MCF 10A (cell line): ENCODE measurements at regions of chr2 and their contacts with region 1.

Region 1: GRCh38 chr2:241686649-241687425 is at the start of gene DTYMK:
- DNase-seq: peak; percentile 97
- H3K4me3 Mint-ChIP-seq: peak within 1 kb of the TSS; percentile 90
- H3K27ac Mint-ChIP-seq: peak within 1 kb of the TSS; percentile 91
- H3K4me1 Mint-ChIP-seq: peaks cover 7% of the 10 kb centered on the region
- H3K27me3 Mint-ChIP-seq: no peaks in the 10 kb centered on the region
- CTCF ChIP-seq: no peak
- total RNA-seq, gene DTYMK: 38.2 and 66.3 TPM in 2 replicates

Region 2: DNA sequence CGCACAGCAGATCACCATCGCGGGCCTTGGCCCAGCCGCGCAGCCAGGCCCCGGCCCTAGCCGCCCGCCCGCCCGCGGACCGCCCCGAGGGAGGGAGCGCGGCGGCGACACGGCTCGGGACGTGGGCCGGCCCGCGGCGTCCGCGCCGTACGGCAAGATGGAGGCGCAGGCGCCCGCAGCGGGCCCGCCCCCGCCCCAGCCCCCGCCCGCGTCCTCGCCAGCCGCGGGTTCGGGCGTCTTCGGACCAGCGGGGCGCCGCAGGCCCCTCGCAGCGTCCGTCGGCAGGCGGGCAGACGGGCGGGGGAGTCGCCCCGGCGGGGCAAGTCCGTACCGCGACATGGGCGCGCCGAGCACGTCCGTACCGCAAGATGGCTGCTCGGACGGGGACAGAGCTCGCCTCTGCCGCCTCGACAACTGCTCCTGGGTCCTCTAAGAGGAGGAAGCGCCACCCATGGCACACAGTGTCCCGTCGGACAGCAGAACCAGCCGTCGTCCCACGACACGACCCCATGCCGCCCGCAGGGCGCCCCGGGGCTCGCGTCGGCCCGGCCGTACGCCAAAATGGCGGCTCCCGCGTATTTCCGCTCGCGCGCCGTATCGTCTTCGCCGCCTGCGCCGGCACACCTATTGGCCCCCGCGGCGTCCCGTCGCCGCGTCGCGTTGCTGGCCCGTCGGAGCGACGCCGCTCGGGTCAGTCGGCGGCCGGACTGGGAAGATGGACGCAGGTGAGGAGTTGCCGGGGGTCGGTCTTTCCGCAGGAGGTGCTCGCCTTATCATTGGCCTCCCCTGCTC is 49.6 kb before region 1 on chr2 and contains the starts of genes ATG4B and THAP4:
- CTCF ChIA-PET with region 1: no interaction called
- POLR2A ChIA-PET with region 1: interaction called, 26 read pairs
- intact Hi-C with region 1: no loop called
- DNase-seq: peak; percentile 86
- H3K4me3 Mint-ChIP-seq: peak within 1 kb of the TSS; percentile 90
- H3K27ac Mint-ChIP-seq: peak within 1 kb of the TSS; percentile 86
- H3K4me1 Mint-ChIP-seq: peaks cover 34% of the 10 kb centered on the region
- H3K27me3 Mint-ChIP-seq: no peaks in the 10 kb centered on the region
- CTCF ChIP-seq: no peak
- total RNA-seq, gene ATG4B: 70.9 and 72.8 TPM in 2 replicates
- total RNA-seq, gene THAP4: 64.5 and 91.8 TPM in 2 replicates

Region 3: DNA sequence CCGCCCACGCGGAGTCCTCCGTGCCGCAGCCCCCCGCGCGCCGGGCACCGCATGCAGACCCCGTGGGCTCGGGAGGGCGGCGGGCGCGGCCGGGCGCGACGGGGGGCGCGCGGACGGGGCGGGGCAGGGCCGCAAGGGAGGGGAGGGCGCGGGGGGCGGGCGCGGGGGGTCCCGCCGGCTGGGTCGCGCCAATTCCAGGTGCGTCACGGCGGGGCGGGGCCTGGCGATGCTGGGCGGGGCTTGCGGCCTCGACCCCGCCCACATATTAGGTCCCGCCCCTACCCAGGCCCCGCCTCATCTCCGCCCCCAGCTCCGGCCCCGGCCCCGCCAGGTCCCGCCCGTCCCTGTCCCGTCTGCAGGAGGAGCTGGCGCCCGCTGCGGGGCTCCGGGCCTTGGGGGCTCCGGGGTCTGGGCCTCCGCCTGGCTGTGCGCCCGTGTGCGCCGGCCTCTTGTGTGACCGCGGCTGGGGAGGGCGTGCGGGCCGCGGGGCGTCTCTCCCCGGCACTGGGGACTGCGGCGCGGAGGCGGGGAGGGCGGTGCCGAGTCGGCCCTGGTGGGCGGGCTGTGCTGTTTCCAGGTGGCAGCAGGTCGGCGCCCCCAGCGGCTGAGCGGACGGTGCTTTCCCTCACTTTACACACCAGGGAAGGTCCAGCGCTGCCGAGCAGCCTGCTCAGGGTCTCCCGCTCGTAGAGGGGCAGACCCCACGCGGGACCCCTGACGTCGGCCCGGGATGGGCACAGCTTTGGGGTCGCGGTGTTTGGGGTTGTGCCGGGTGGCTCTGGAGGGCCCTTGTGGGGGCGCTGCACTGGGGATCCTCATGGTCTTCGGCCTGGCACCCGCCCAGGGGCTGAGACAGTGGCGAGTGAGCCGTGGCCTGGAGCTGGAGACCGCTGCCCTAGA is 15.5 kb after region 1 on chr2:
- CTCF ChIA-PET with region 1: interaction called, 6 read pairs
- POLR2A ChIA-PET with region 1: interaction called, 136 read pairs
- intact Hi-C with region 1: no loop called
- DNase-seq: peak; percentile 69
- H3K4me3 Mint-ChIP-seq: peak overlapping the region; percentile 76
- H3K27ac Mint-ChIP-seq: peak overlapping the region; percentile 41
- H3K4me1 Mint-ChIP-seq: peaks cover 10% of the 10 kb centered on the region
- H3K27me3 Mint-ChIP-seq: no peaks in the 10 kb centered on the region
- CTCF ChIP-seq: peak; percentile 18

Region 4: GRCh38 chr2:241734467-241735208 is 47.8 kb after region 1 on chr2 and contains the start of gene D2HGDH:
- CTCF ChIA-PET with region 1: interaction called, 3 read pairs
- POLR2A ChIA-PET with region 1: interaction called, 19 read pairs
- intact Hi-C with region 1: no loop called
- DNase-seq: peak; percentile 85
- H3K4me3 Mint-ChIP-seq: peak within 1 kb of the TSS; percentile 71
- H3K27ac Mint-ChIP-seq: no peak within 1 kb of the TSS
- H3K4me1 Mint-ChIP-seq: peaks cover 10% of the 10 kb centered on the region
- H3K27me3 Mint-ChIP-seq: no peaks in the 10 kb centered on the region
- CTCF ChIP-seq: no peak
- total RNA-seq, gene D2HGDH: 37.5 and 41.5 TPM in 2 replicates

Region 5: GRCh38 chr2:241762933-241763369 is 76.1 kb after region 1 on chr2:
- CTCF ChIA-PET with region 1: no interaction called
- POLR2A ChIA-PET with region 1: no interaction called
- intact Hi-C with region 1: no loop called
- DNase-seq: no peak
- H3K4me3 Mint-ChIP-seq: no peak overlapping the region
- H3K27ac Mint-ChIP-seq: no peak overlapping the region
- H3K4me1 Mint-ChIP-seq: no peaks in the 10 kb centered on the region
- H3K27me3 Mint-ChIP-seq: no peaks in the 10 kb centered on the region
- CTCF ChIP-seq: no peak

Region 6: GRCh38 chr2:241877989-241878970 is 191.4 kb after region 1 on chr2:
- CTCF ChIA-PET with region 1: interaction called, 5 read pairs
- POLR2A ChIA-PET with region 1: interaction called, 3 read pairs
- intact Hi-C with region 1: loop called (anchors 5 kb)
- DNase-seq: peak; percentile 76
- H3K4me3 Mint-ChIP-seq: no peak overlapping the region
- H3K27ac Mint-ChIP-seq: no peak overlapping the region
- H3K4me1 Mint-ChIP-seq: no peaks in the 10 kb centered on the region
- H3K27me3 Mint-ChIP-seq: no peaks in the 10 kb centered on the region
- CTCF ChIP-seq: peak; percentile 72